Gastrocnemius medialis (tissue), 4 donors: ENCODE measurements at regions of chr20 and their contacts with region 1.

Region 1: GRCh38 chr20:62143118-62143973 is at the starts of genes PSMA7 and SS18L1:
- DNase-seq: peak; percentile 71 to 80
- ATAC-seq: peak; percentile 73 to 79
- H3K4me3 ChIP-seq: peak within 1 kb of the TSS; percentile 80 to 95 (median 88)
- H3K27ac ChIP-seq: peak within 1 kb of the TSS; percentile 91 to 96 (median 95)
- H3K4me1 ChIP-seq: peaks cover 38 to 53% of the 10 kb centered on the region in 2 donors
- H3K27me3 ChIP-seq: no peaks in the 10 kb centered on the region
- CTCF ChIP-seq: no peak
- POLR2A ChIP-seq: peak; percentile 99
- total RNA-seq, gene PSMA7: 632 to 1,338 (median 1,003) TPM
- total RNA-seq, gene SS18L1: 11.5 to 31.8 (median 16.9) TPM

Region 2: DNA sequence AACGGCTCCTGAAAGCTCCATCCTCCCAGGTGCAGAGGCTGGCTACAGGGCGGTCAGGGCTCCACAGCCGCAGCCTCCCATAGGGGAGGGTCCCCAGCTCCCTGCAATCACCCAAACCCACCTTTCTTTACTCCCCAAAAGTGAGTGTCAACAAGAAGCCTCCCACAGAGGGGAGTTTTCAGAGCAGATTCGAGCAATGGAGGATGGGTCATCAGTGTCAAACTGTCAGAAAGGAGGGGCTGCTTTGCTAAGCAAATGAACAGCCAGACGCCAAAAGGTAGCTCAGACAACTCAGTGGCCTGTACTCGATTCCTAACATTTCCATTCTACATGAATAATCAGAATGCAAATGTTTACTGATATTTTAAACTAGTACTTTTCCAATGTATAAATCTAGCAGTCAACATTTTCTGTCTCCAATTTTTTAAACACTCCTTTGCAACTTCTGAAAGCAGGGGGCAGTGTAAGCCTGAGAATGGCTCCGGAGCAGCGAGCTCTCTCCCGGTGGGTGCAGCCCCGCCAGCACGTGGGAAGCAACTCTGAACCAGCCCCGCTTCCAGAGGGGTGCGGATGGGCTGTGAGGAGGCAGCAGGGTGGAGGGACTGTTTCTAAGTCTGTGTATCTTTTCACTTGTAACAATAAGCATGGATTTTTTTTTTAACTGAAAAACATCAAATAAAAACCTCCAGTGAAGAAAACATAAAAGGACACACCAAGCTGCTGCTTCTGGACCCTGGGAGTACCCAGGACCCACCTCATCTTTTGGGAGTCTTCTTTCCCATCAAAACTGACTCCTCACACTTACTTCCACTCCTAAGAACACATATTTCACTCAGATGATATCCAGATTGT is 132.6 kb before region 1 on chr20:
- in situ Hi-C with region 1: loop called in 2 of 4 experiments (anchors 25 kb)
- intact Hi-C with region 1: no loop called
- DNase-seq: peak in 1 of 2 donors; percentile 40
- ATAC-seq: peak in 1 of 2 donors; percentile 67
- H3K4me3 ChIP-seq: no peak overlapping the region
- H3K27ac ChIP-seq: no peak overlapping the region
- H3K4me1 ChIP-seq: peaks cover 0 to 5% of the 10 kb centered on the region in 2 donors
- H3K27me3 ChIP-seq: no peaks in the 10 kb centered on the region
- CTCF ChIP-seq: peak; percentile 57 to 67 (median 60)
- POLR2A ChIP-seq: no peak

Region 3: GRCh38 chr20:62065669-62066338 is 77.5 kb before region 1 on chr20 and contains the start of gene TAF4:
- in situ Hi-C with region 1: no loop called
- intact Hi-C with region 1: loop called (anchors 1 kb)
- DNase-seq: peak; percentile 58 to 68
- ATAC-seq: peak; percentile 74 to 77
- H3K4me3 ChIP-seq: peak within 1 kb of the TSS; percentile 62 to 76 (median 72)
- H3K27ac ChIP-seq: peak within 1 kb of the TSS; percentile 82 to 89 (median 86)
- H3K4me1 ChIP-seq: peaks cover 48 to 49% of the 10 kb centered on the region in 2 donors
- H3K27me3 ChIP-seq: no peaks in the 10 kb centered on the region
- CTCF ChIP-seq: no peak
- POLR2A ChIP-seq: peak; percentile 86 to 90
- total RNA-seq, gene TAF4: 8.0 to 24.9 (median 13.9) TPM

Region 4: GRCh38 chr20:62097881-62098407 is 45.4 kb before region 1 on chr20:
- in situ Hi-C with region 1: no loop called
- intact Hi-C with region 1: no loop called
- DNase-seq: no peak
- ATAC-seq: no peak
- H3K4me3 ChIP-seq: no peak overlapping the region
- H3K27ac ChIP-seq: no peak overlapping the region
- H3K4me1 ChIP-seq: no peaks in the 10 kb centered on the region
- H3K27me3 ChIP-seq: peaks cover 0 to 10% (median 0%) of the 10 kb centered on the region in 3 donors
- CTCF ChIP-seq: no peak
- POLR2A ChIP-seq: no peak

Region 5: DNA sequence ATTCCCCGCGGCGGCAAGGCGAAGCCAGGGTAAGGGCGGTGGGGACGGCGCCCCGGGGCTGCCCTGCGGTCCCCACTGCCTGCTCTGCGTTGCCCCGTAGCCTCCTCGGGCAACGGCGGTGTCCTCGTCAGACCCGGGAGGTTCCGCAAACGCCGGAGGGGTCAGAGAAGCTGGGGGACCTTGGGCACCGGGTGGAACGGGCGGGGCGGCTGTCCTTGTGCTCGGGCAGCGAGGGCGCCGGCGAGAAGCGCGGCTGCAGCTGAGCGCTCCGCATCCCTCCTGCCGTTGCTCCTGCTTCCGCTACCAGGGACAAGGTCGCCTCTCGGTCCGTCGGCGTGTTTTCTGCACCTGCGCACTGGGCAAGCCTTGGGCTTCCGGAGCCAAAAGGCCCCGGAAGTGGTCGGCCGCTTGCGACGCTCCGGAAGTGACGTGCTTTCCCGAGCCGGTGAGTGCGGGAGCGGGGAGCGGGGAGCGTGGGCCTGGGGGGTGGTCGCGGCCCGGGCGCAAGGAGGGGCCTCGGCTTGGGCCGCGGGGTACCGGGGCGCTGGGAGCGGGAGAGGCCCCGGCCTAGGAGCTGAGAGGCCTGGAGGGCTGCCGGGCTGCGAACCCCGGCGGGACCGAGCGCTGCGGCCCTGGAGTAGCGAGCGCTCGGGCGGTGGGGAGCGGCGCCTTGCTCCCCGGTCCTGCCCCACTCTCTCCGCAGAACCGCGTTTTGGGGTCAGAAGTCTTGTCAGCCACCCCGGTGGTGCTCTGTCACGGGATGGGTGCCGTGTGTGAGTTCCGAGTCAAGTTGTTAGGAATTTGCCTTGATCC is 39.5 kb after region 1 on chr20 and contains the start of gene MTG2:
- in situ Hi-C with region 1: no loop called
- intact Hi-C with region 1: loop called (anchors 5 kb)
- DNase-seq: peak; percentile 92 to 94
- ATAC-seq: peak; percentile 98
- H3K4me3 ChIP-seq: peak within 1 kb of the TSS; percentile 77 to 99 (median 84)
- H3K27ac ChIP-seq: peak within 1 kb of the TSS; percentile 87 to 97 (median 90)
- H3K4me1 ChIP-seq: peaks cover 16 to 20% of the 10 kb centered on the region in 2 donors
- H3K27me3 ChIP-seq: no peaks in the 10 kb centered on the region
- CTCF ChIP-seq: peak in 3 of 5 experiments; percentile 14 to 25 (median 15)
- POLR2A ChIP-seq: peak; percentile 89 to 93
- total RNA-seq, gene MTG2: 21.0 to 50.8 (median 29.3) TPM

Region 6: GRCh38 chr20:62407221-62407992 is 264.1 kb after region 1 on chr20 and contains the start of gene CABLES2:
- in situ Hi-C with region 1: no loop called
- intact Hi-C with region 1: no loop called
- DNase-seq: peak; percentile 87 to 94
- ATAC-seq: peak; percentile 94 to 95
- H3K4me3 ChIP-seq: peak within 1 kb of the TSS; percentile 53 to 63 (median 62)
- H3K27ac ChIP-seq: peak within 1 kb of the TSS in 3 of 4 donors; percentile 3 to 62 (median 51)
- H3K4me1 ChIP-seq: peaks cover 20 to 25% of the 10 kb centered on the region in 2 donors
- H3K27me3 ChIP-seq: no peaks in the 10 kb centered on the region
- CTCF ChIP-seq: peak in 3 of 5 experiments; percentile 14 to 52 (median 44)
- POLR2A ChIP-seq: peak; percentile 15 to 52
- total RNA-seq, gene CABLES2: 3.6 to 9.3 (median 4.2) TPM

Region 7: DNA sequence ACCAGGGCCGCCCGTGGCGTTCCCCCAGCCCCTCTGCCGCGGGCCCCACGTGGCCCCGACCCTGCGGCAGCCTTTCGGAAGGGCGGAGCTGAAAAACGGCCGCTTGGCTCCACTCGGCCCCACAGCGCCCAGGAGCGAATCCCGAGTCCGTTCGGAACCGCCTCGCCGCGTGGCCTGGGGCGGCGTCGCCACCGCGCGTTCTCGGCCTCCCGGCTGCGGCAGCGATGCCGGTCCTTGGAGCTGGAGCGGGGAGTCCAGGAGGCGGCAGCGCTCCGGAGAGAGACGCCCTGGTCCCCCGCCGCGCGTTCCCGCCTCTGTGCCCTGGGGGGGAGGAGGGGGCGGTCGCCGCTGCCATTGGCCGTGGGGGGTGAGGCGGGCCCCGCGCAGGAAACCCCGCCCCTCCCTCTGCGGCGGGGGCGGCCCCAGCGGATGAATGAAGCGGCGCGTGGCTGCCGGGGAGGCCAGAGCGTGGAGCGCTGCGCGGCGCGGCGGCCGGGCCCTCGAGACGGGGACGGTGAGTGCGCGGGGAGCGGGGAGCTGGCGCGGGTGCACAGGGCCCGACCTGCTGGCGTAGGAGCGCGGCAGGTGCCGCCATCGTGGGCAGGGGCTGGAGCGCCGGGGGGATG is 498.8 kb after region 1 on chr20 and contains the start of gene SLCO4A1:
- in situ Hi-C with region 1: no loop called
- intact Hi-C with region 1: loop called (anchors 10 kb)
- DNase-seq: peak; percentile 62 to 71
- ATAC-seq: peak; percentile 58 to 74
- H3K4me3 ChIP-seq: peak within 1 kb of the TSS; percentile 66 to 72 (median 70)
- H3K27ac ChIP-seq: peak within 1 kb of the TSS; percentile 76 to 95 (median 91)
- H3K4me1 ChIP-seq: peaks cover 13 to 35% of the 10 kb centered on the region in 2 donors
- H3K27me3 ChIP-seq: peaks cover 8 to 12% (median 9%) of the 10 kb centered on the region in 3 donors
- CTCF ChIP-seq: peak in 1 of 5 experiments; percentile 19
- POLR2A ChIP-seq: peak; percentile 95 to 96
- total RNA-seq, gene SLCO4A1: 20.4 to 26.9 (median 21.8) TPM